Esophagus squamous epithelium (tissue), 5 donors: ENCODE measurements at regions of chr1 and their contacts with region 1.

Region 1: DNA sequence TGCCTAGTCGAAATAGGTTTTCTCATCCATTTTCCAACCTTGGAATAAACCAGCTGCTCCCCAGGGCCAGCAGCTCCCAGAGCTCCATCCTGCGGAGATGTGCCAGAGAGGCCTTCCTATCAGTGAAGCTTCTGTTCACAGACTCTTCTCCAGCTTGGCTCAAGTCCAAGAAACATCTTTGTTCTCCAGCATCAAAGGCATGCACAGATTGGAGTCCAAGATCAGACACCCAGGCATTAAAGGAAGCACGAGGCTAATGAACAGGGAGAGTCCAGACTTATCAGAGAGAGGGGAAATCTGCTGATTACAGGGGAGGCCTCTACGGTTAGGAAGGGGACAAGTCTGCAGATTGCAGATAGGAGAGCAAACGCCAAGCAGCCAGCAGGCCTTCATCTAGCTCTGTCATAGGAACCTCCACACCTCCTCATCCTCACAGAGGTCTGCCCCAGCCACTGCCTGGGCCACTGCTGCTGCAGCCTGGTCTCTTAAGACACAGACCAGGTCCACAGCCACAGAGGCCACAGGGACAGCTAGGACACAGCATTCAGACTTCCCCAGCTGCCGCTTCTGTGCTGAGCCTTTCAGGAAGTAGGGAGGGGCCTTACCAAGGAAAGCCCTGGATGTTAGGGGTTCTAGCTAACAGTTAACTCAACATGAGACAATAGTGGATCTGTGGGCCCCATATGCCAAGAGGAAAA is 3.4 kb downstream of the PRR9 start:
- DNase-seq: no peak
- H3K4me3 ChIP-seq: no peak overlapping the region
- H3K27ac ChIP-seq: no peak overlapping the region
- H3K4me1 ChIP-seq: peaks cover 0 to 6% (median 0%) of the 10 kb centered on the region in 3 donors
- H3K27me3 ChIP-seq: peaks cover 0 to 7% (median 0%) of the 10 kb centered on the region in 4 donors
- CTCF ChIP-seq: no peak
- POLR2A ChIP-seq: no peak

Region 2: GRCh38 chr1:152654110-152654509 is 566.6 kb before region 1 on chr1:
- intact Hi-C with region 1: loop called (anchors 10 kb)
- DNase-seq: no peak
- H3K4me3 ChIP-seq: no peak overlapping the region
- H3K27ac ChIP-seq: no peak overlapping the region
- H3K4me1 ChIP-seq: no peaks in the 10 kb centered on the region
- H3K27me3 ChIP-seq: no peaks in the 10 kb centered on the region
- CTCF ChIP-seq: peak; percentile 34 to 73 (median 62)
- POLR2A ChIP-seq: no peak

Region 3: DNA sequence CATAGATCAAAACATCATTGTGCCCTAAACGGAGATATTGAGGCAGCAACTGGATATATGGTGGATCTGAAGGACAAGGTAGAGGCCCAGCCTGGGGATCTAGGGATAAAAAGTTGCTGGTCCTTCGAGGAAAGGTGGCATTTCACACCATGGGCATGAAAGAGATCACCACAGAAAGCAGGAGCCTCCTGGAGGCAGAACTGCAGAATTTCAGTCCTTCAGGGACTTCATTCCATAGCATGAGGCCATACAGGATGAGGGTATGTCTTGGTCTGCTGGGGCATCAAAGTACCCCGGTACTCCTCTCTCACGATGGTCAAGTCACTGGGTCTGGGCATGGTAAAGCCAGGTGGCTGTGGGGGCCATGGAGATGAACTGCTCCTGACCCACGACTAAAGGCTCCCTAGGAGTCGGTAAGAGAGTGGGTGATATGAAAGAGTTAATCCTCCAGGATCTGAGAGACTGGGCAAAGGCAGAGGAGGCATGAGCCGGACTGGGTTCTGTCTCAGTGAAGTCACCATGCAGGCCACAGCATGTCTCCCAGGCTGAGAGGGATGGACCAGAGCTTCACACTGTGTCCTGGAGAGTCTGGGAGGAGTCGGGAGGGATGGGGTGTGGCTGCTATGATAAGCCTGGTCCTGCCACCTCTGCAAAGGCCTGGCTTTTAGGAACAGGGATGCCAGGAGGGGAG is 279.6 kb before region 1 on chr1:
- intact Hi-C with region 1: no loop called
- DNase-seq: no peak
- H3K4me3 ChIP-seq: no peak overlapping the region
- H3K27ac ChIP-seq: peak overlapping the region in 3 of 4 donors; percentile 21 to 78 (median 68)
- H3K4me1 ChIP-seq: peaks cover 5 to 19% (median 6%) of the 10 kb centered on the region in 3 donors
- H3K27me3 ChIP-seq: no peaks in the 10 kb centered on the region
- CTCF ChIP-seq: peak in 1 of 6 experiments; percentile 25
- POLR2A ChIP-seq: no peak

Region 4: GRCh38 chr1:153032677-153033308 is 188.0 kb before region 1 on chr1:
- intact Hi-C with region 1: no loop called
- DNase-seq: no peak
- H3K4me3 ChIP-seq: peak overlapping the region in 2 of 4 donors; percentile 24 to 41
- H3K27ac ChIP-seq: peak overlapping the region; percentile 66 to 75 (median 69)
- H3K4me1 ChIP-seq: peaks cover 0 to 39% (median 4%) of the 10 kb centered on the region in 3 donors
- H3K27me3 ChIP-seq: no peaks in the 10 kb centered on the region
- CTCF ChIP-seq: peak in 5 of 6 experiments; percentile 24 to 62 (median 45)
- POLR2A ChIP-seq: no peak

Region 5: DNA sequence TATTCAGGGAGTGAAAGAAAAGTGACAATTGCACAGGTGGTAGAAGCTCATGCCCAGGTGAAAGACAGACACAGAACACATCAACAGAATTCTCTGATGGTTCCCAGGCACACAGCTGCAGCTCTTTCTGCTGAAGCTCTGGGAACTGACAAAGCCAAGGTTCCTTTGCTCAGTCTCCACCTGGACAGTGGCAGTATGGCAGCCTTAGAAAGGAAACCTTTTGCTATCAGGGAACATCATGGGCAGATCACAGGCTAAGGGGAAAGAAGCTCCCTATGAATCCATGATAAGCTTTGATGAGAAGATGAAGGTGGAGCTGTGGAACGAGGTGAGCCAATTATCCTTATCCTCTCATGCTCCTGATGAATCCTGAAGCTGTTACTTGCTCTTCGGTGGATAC is 150.5 kb before region 1 on chr1:
- intact Hi-C with region 1: no loop called
- DNase-seq: no peak
- H3K4me3 ChIP-seq: no peak overlapping the region
- H3K27ac ChIP-seq: no peak overlapping the region
- H3K4me1 ChIP-seq: peaks cover 0 to 4% (median 0%) of the 10 kb centered on the region in 3 donors
- H3K27me3 ChIP-seq: no peaks in the 10 kb centered on the region
- CTCF ChIP-seq: peak in 1 of 6 experiments; percentile 13
- POLR2A ChIP-seq: no peak

Region 6: GRCh38 chr1:153152481-153152880 is 68.3 kb before region 1 on chr1:
- intact Hi-C with region 1: no loop called
- DNase-seq: no peak
- H3K4me3 ChIP-seq: no peak overlapping the region
- H3K27ac ChIP-seq: no peak overlapping the region
- H3K4me1 ChIP-seq: no peaks in the 10 kb centered on the region
- H3K27me3 ChIP-seq: no peaks in the 10 kb centered on the region
- CTCF ChIP-seq: no peak
- POLR2A ChIP-seq: no peak